CD4-positive, alpha-beta T cell (primary cell): ENCODE measurements at regions of chr5 and their contacts with region 1.

Region 1: DNA sequence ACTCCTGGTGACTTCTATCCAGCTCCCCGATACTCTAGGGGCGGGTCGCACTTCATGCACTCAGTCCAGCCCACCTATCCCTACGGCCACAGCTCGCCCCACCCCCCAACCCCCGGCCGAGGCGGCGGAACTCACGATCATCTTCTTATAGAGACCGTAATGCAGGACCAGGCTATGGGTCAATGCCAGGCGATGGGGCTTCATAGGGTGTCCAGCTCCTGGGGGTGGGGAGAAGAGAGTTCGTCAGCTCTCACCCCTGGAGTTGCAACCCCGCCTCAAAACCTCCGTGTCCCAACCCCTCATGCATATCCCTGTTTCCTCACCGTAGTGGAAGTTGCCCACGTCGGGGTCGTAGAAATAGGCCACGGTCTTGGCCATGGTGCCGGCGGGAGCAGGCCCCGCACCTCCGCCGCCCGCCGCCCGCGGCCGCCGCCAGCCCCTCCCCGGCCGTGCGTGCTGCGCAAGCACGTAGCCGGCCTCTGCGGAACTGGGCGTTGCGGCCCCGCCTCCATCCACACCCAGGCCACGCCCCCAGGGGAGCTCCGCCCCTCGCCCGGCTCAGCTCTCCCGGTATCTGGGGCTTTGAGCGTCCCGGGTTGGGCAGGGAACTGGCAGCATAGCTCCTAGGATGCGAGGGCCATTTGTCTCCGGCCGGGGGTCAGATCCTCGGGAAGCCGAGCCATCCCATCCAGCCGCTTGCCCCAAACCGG is at the starts of genes HDAC3 and RELL2:
- DNase-seq: peak; percentile 88 to 97 (median 94)
- ATAC-seq: peak; percentile 86
- H3K4me3 ChIP-seq: peak within 1 kb of the TSS; percentile 97
- H3K4me3 Mint-ChIP-seq: peak within 1 kb of the TSS; percentile 92
- H3K27ac ChIP-seq: peak within 1 kb of the TSS; percentile 77 to 79
- H3K27ac Mint-ChIP-seq: peak within 1 kb of the TSS; percentile 89
- H3K4me1 ChIP-seq: peaks cover 42% of the 10 kb centered on the region
- H3K4me1 Mint-ChIP-seq: peaks cover 45% of the 10 kb centered on the region
- H3K27me3 ChIP-seq: no peaks in the 10 kb centered on the region
- H3K27me3 Mint-ChIP-seq: no peaks in the 10 kb centered on the region
- CTCF ChIP-seq: no peak
- total RNA-seq, gene HDAC3: 51.1 to 52.7 TPM
- total RNA-seq, gene RELL2: 10.9 to 11.4 TPM

Region 2: DNA sequence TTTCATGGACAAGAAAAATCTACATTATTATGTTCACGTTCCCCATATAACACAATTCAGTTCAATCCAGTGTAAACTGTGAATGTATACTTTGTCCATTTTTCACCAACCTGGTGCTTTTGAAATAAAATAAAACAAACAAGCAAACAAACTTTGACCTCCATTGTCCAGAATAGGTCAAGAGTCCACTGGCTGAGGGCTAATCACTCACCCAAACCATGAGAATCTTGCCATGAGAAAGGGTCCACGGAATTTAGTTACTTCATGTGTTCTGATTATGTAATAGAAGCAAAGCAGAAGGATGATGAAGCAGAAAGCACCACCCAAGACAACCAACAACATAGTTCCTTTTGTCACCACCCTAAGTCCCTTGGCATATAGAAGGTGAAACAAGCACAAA is 46.4 kb before region 1 on chr5:
- CTCF ChIA-PET with region 1: interaction called, 43 read pairs
- POLR2A ChIA-PET with region 1: interaction called, 25 read pairs
- intact Hi-C with region 1: loop called (anchors 1 to 5 kb)
- DNase-seq: peak in 1 of 14 experiments; percentile 24
- ATAC-seq: no peak
- H3K4me3 ChIP-seq: no peak overlapping the region
- H3K4me3 Mint-ChIP-seq: no peak overlapping the region
- H3K27ac ChIP-seq: no peak overlapping the region
- H3K27ac Mint-ChIP-seq: no peak overlapping the region
- H3K4me1 ChIP-seq: peaks cover 21% of the 10 kb centered on the region
- H3K4me1 Mint-ChIP-seq: peaks cover 73% of the 10 kb centered on the region
- H3K27me3 ChIP-seq: no peaks in the 10 kb centered on the region
- H3K27me3 Mint-ChIP-seq: no peaks in the 10 kb centered on the region
- CTCF ChIP-seq: no peak

Region 3: DNA sequence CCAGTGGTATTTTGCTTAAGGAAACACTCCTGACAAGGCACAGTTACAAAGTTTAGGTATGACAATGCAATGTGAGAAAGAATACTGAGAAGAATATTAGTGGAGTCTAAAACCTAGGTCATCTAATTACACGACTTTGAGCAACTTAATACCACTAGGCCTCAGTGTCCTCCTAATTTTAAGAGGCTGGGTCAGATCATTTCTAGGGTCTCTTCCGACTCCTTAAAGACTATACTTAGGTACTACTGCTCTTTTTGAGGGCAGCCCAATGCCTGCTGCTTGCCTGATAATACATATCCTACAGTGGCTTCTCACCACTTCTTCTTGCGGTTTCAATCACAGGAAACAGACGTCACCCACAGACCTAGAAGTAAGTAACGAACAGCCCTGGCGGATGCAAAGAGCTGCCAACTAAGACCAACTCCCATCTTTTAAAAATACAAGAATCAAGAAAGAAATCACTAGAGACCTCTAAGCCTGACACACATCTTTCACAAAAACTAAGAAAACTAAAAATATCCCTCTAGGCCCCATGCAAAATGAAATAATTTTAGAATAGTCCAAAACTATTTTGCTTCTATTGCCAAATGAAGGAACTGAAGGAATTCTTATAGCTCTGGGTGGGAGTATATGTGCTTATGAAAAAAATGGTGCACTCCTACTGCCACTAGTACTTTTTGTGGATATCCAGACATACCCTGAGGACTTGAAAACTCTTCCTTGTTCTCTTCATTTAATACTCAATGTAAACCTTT is 30.9 kb before region 1 on chr5:
- CTCF ChIA-PET with region 1: interaction called, 4 read pairs
- POLR2A ChIA-PET with region 1: interaction called, 26 read pairs
- intact Hi-C with region 1: no loop called
- DNase-seq: peak; percentile 43 to 95 (median 64)
- ATAC-seq: peak; percentile 92
- H3K4me3 ChIP-seq: peak overlapping the region; percentile 14
- H3K4me3 Mint-ChIP-seq: peak overlapping the region; percentile 73
- H3K27ac ChIP-seq: peak overlapping the region; percentile 75 to 84
- H3K27ac Mint-ChIP-seq: peak overlapping the region; percentile 91
- H3K4me1 ChIP-seq: peaks cover 71% of the 10 kb centered on the region
- H3K4me1 Mint-ChIP-seq: peaks cover 85% of the 10 kb centered on the region
- H3K27me3 ChIP-seq: no peaks in the 10 kb centered on the region
- H3K27me3 Mint-ChIP-seq: no peaks in the 10 kb centered on the region
- CTCF ChIP-seq: no peak

Region 4: GRCh38 chr5:141650851-141651727 is 14.5 kb after region 1 on chr5 and contains the start of gene FCHSD1:
- CTCF ChIA-PET with region 1: interaction called, 4 read pairs
- POLR2A ChIA-PET with region 1: interaction called, 73 read pairs
- intact Hi-C with region 1: loop called in 1 of 2 experiments (anchors 1 kb)
- DNase-seq: peak; percentile 62 to 88 (median 76)
- ATAC-seq: peak; percentile 91
- H3K4me3 ChIP-seq: peak within 1 kb of the TSS; percentile 86
- H3K4me3 Mint-ChIP-seq: peak within 1 kb of the TSS; percentile 86
- H3K27ac ChIP-seq: peak within 1 kb of the TSS; percentile 26 to 83
- H3K27ac Mint-ChIP-seq: peak within 1 kb of the TSS; percentile 54
- H3K4me1 ChIP-seq: peaks cover 28% of the 10 kb centered on the region
- H3K4me1 Mint-ChIP-seq: peaks cover 38% of the 10 kb centered on the region
- H3K27me3 ChIP-seq: no peaks in the 10 kb centered on the region
- H3K27me3 Mint-ChIP-seq: peaks cover 3% of the 10 kb centered on the region
- CTCF ChIP-seq: no peak
- total RNA-seq, gene FCHSD1: 79.8 to 86.8 TPM

Region 5: GRCh38 chr5:141923448-141924352 is 287.1 kb after region 1 on chr5 and contains the start of gene DELE1:
- CTCF ChIA-PET with region 1: no interaction called
- POLR2A ChIA-PET with region 1: interaction called, 10 read pairs
- intact Hi-C with region 1: no loop called
- DNase-seq: peak; percentile 82 to 95 (median 87)
- ATAC-seq: peak; percentile 94
- H3K4me3 ChIP-seq: peak within 1 kb of the TSS; percentile 75
- H3K4me3 Mint-ChIP-seq: peak within 1 kb of the TSS; percentile 96
- H3K27ac ChIP-seq: peak within 1 kb of the TSS; percentile 94 to 96
- H3K27ac Mint-ChIP-seq: peak within 1 kb of the TSS; percentile 99
- H3K4me1 ChIP-seq: peaks cover 30% of the 10 kb centered on the region
- H3K4me1 Mint-ChIP-seq: peaks cover 45% of the 10 kb centered on the region
- H3K27me3 ChIP-seq: no peaks in the 10 kb centered on the region
- H3K27me3 Mint-ChIP-seq: no peaks in the 10 kb centered on the region
- CTCF ChIP-seq: no peak
- total RNA-seq, gene DELE1: 60.0 to 61.1 TPM